Head of caudate nucleus (tissue), 42 donors: ENCODE measurements at regions of chr11 and their contacts with region 1.

Region 1: GRCh38 chr11:127003260-127003981 is 2.9 kb upstream of the KIRREL3 start:
- DNase-seq: peak; percentile 40 to 88 (median 73)

Region 2: DNA sequence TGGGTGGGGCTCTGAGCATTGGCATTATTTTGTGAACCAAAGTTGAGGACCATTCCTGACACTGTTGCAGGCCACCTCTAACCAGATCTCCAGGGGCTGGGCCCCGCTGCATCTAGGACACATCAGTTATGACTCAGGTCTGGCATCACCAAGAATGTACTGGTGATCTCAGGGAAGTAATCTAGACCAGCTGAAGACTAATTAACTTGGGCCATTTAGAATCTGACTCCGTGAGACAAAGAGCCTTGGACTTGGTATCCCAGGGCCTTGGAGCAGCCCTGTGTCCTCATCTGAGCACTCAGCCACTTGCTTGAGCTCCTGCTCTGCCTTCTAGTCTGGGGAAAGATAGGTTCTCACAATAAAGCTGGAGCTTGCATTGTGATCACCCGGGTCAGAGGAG is 203.4 kb before region 1 on chr11:
- intact Hi-C with region 1: no loop called
- DNase-seq: peak in 1 of 42 donors; percentile 22

Region 3: DNA sequence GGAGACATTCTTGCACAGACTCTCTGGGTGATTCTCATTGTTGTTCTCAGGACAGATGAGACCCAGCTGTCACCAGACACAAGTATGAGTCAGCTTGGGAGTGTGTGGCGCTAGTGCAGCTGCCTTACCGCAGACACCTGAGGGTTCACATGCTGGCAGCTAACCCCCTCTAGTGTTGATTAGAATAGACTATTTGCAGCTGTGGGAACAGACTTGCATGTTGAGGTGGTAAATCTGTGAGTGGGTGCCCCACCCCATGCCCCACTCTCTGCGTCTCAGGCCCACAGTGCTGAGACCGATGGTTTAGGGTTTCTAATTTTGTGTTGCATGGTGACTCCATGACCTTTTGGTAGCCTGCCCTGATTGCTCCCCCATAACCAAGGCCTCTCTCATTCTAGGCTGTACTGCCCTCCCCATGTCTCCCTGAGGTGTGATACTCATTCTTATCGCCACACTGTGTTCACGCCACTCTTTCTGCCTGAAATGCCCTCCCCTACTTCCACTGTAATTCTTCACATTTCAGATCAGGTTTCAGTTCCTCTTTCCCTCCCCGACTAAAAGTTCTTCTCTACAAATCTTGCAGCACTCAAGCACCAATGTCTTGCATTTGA is 70.8 kb after region 1 on chr11:
- intact Hi-C with region 1: loop called (anchors 10 kb)
- DNase-seq: peak in 41 of 42 donors; percentile 27 to 89 (median 63)

Region 4: GRCh38 chr11:127345819-127346459 is 342.5 kb after region 1 on chr11:
- intact Hi-C with region 1: loop called (anchors 10 kb)
- DNase-seq: peak; percentile 13 to 85 (median 62)